CD14-positive monocyte (primary cell): ENCODE measurements at regions of chr1 and their contacts with region 1.

Region 1: DNA sequence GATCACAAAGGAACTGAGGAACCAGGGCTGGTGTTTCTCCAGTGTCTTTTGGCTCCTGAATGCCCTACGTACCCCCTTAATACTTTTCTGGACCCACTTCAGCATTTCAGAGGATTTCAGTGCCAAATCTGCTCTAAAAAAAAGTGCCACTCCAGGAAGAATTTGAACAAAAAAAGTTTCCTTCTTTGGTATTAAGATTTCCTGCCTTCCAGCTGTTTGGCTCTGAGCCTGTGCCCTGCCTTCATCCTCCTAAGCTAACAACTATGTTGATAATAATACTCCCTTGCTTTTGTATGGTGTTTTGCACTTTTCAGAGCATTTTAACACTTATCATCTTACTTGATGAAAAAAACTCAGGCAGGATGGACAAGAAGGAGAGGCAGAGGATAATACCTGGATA is 11.0 kb upstream of the RIMS3 start:
- DNase-seq: no peak
- H3K4me3 ChIP-seq: no peak overlapping the region
- H3K4me3 Mint-ChIP-seq: no peak overlapping the region
- H3K27ac ChIP-seq: no peak overlapping the region
- H3K27ac Mint-ChIP-seq: no peak overlapping the region
- H3K4me1 ChIP-seq: no peaks in the 10 kb centered on the region
- H3K4me1 Mint-ChIP-seq: no peaks in the 10 kb centered on the region
- H3K27me3 ChIP-seq: no peaks in the 10 kb centered on the region
- H3K27me3 Mint-ChIP-seq: peaks cover 2 to 14% (median 7%) of the 10 kb centered on the region in 3 donors
- CTCF ChIP-seq: no peak

Region 2: GRCh38 chr1:40592107-40592803 is 84.2 kb before region 1 on chr1:
- intact Hi-C with region 1: loop called in 1 of 2 experiments (anchors 10 kb)
- DNase-seq: peak; percentile 31 to 57 (median 56)
- H3K4me3 ChIP-seq: no peak overlapping the region
- H3K4me3 Mint-ChIP-seq: no peak overlapping the region
- H3K27ac ChIP-seq: no peak overlapping the region
- H3K27ac Mint-ChIP-seq: no peak overlapping the region
- H3K4me1 ChIP-seq: peaks cover 12 to 22% of the 10 kb centered on the region in 2 donors
- H3K4me1 Mint-ChIP-seq: peaks cover 27% of the 10 kb centered on the region
- H3K27me3 ChIP-seq: no peaks in the 10 kb centered on the region
- H3K27me3 Mint-ChIP-seq: peaks cover 1 to 6% (median 2%) of the 10 kb centered on the region in 3 donors
- CTCF ChIP-seq: peak; percentile 67

Region 3: GRCh38 chr1:40722636-40723035 is 46.1 kb after region 1 on chr1:
- intact Hi-C with region 1: loop called in 1 of 2 experiments (anchors 5 kb)
- DNase-seq: no peak
- H3K4me3 ChIP-seq: no peak overlapping the region
- H3K4me3 Mint-ChIP-seq: no peak overlapping the region
- H3K27ac ChIP-seq: peak overlapping the region in 1 of 2 donors; percentile 57
- H3K27ac Mint-ChIP-seq: peak overlapping the region in 5 of 7 donors; percentile 2 to 75 (median 33)
- H3K4me1 ChIP-seq: peaks cover 6 to 9% of the 10 kb centered on the region in 2 donors
- H3K4me1 Mint-ChIP-seq: peaks cover 34% of the 10 kb centered on the region
- H3K27me3 ChIP-seq: no peaks in the 10 kb centered on the region
- H3K27me3 Mint-ChIP-seq: no peaks in the 10 kb centered on the region
- CTCF ChIP-seq: no peak

Region 4: DNA sequence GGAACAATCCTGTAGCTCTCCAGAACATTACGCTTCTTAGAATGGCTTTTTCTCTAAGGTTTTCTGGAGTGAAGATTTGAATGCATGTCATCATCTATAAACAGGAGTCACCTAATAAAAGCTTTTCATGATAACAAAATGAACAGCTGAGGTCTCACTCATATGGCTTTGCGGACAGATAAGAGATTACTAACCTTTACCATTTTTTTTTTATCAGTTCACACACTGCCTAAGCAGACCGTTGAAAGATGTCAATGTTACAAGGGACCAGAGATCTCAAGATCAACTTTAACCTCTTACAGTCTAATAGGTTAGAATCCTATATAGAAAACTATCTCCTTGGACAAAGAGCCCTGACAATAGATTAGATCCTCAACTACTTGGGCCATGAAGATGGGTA is 524.2 kb after region 1 on chr1:
- intact Hi-C with region 1: no loop called
- DNase-seq: no peak
- H3K4me3 ChIP-seq: no peak overlapping the region
- H3K4me3 Mint-ChIP-seq: no peak overlapping the region
- H3K27ac ChIP-seq: no peak overlapping the region
- H3K27ac Mint-ChIP-seq: no peak overlapping the region
- H3K4me1 ChIP-seq: no peaks in the 10 kb centered on the region
- H3K4me1 Mint-ChIP-seq: peaks cover 3% of the 10 kb centered on the region
- H3K27me3 ChIP-seq: no peaks in the 10 kb centered on the region
- H3K27me3 Mint-ChIP-seq: no peaks in the 10 kb centered on the region
- CTCF ChIP-seq: no peak